ENCODE measurements at regions of chr9 and their contacts with region 1.

Region 1: GRCh38 chr9:99906403-99907207 is at the start of gene STX17:
- DNase-seq: no peak
- ATAC-seq: peak; percentile 96
- H3K4me3 ChIP-seq: peak within 1 kb of the TSS; percentile 66 to 75
- H3K27ac ChIP-seq: peak within 1 kb of the TSS; percentile 81
- H3K4me1 ChIP-seq: peaks cover 3% of the 10 kb centered on the region; the same call in 1 of the 2 replicates
- H3K27me3 ChIP-seq: no peaks in the 10 kb centered on the region
- CTCF ChIP-seq: no peak
- total RNA-seq, gene STX17: 11.5 TPM

Region 2: DNA sequence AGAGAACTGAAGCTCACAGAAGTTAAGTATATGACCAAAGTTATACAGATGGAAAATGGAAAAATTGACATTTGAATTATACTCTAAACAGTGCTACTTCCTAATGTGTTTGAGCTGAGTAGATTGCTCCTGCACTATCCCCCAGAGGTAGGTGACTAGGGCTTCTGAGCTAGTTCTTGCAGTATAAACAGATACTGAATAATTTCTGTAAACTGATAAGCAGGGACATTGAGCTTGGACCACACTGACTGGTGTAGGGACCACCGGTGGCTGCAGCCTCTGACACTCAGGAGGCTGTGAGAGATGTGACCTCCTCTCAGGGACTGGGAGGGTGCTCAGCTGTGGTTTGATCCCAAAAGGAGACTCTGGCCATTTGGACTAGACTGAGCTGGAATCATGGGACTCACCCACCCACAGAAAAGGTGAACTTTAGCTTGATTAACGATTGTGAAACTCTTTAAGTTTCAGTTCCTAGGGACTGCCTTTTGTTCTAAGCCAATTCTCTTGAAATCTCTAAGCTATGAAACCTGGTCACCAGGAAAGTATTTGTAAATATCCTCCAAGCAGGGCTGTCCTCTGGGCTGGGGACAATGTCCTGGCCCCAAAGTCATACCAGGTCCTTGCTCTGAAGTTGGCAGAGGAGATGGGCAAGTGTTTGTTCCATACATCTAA is 393.0 kb before region 1 on chr9:
- CTCF ChIA-PET with region 1: no interaction called
- POLR2A ChIA-PET with region 1: no interaction called
- in situ Hi-C with region 1: no loop called
- intact Hi-C with region 1: no loop called
- DNase-seq: no peak
- ATAC-seq: no peak
- H3K4me3 ChIP-seq: no peak overlapping the region
- H3K27ac ChIP-seq: no peak overlapping the region
- H3K4me1 ChIP-seq: no peaks in the 10 kb centered on the region
- H3K27me3 ChIP-seq: no peaks in the 10 kb centered on the region
- CTCF ChIP-seq: no peak

Region 3: GRCh38 chr9:99819856-99820684 is 86.5 kb before region 1 on chr9:
- CTCF ChIA-PET with region 1: no interaction called
- POLR2A ChIA-PET with region 1: interaction called, 4 read pairs
- in situ Hi-C with region 1: no loop called
- intact Hi-C with region 1: loop called (anchors 5 kb)
- DNase-seq: no peak
- ATAC-seq: peak; percentile 76
- H3K4me3 ChIP-seq: peak overlapping the region; percentile 56 to 88
- H3K27ac ChIP-seq: no peak overlapping the region; the same call in 1 of the 2 replicates
- H3K4me1 ChIP-seq: no peaks in the 10 kb centered on the region
- H3K27me3 ChIP-seq: no peaks in the 10 kb centered on the region
- CTCF ChIP-seq: peak; percentile 16; the same call in 1 of the 2 replicates